Posterior vena cava (tissue), 2 donors: ENCODE measurements at regions of chr2 and their contacts with region 1.

Region 1: GRCh38 chr2:196729418-196729817 is 70.1 kb downstream of the GTF3C3 start:
- DNase-seq: no peak

Region 2: DNA sequence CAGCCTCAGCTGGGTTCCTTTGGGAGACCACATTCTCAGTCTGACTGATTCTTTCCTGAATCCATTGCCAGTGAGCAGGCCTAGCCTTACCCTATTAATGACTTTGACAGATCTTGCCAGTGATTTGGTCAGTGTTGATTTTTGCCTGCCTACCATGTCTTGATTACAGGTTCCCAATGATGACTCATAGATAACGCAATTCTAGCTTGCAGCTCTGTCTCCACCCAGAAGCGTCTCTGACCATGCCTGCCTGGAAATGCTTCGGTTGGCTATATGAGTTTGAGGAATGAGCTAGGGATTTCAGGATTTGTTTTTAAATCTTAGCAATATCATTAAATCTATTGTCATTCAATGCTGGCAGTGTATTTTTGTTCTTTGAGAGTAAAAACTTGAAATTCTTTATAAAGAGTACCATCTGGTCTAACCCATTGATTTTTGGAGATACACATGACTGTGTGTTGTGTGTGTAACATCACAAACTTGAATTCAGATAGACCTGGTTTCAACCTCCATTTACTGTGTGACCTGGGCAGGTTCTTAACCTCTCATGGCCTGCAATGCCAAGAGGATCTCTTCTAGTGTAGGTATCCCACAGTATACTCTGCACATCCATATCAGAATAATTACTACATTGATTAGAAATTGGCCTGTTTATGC is 32.9 kb before region 1 on chr2:
- intact Hi-C with region 1: loop called in 1 of 2 experiments (anchors 2 kb)
- DNase-seq: no peak

Region 3: GRCh38 chr2:198116756-198117155 is 1387.3 kb after region 1 on chr2:
- intact Hi-C with region 1: no loop called
- DNase-seq: no peak